ENCODE measurements at regions of chr4 and their contacts with region 1.

Region 1: DNA sequence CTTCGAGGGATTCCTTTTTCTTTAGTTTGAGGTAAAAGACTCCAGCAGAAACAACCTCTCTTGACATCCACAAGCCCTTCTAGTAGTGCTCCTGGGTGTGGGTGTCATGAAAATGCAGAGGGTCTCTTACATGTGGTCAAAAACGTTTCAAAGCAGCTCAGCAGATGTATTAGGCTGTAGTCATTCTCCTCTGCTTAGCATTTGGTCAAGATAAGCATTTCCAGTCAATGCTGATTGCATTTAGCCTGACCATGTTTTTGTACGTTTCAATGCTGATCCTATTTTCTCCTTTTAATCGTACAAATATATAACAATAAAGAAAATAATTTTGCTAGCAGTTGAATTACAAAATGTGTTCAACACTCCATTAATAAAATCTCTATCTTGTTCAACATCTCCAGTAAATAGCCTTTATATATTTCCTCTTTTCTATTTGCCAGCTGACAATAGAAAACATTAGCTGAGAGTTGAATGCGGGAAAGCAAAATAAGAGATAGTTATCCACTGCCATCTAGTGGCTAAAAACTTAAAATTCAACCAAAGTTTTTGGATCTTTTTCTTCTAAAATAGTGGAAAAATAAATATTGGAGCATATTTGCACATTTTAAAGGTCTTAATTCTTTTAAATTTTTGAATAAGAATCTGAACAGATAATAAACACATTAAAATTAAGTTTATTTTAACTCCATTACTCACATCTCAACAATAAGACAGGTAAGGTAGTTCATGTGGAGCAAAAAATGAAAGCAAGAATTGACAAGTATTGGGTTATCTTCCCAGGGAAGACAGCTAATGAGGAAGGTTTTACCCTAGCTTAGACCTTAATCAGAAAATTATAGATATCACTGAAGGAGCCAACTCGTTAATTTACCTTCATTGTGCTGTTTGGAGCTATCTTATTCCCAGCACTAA is 15.2 kb upstream of the PACRGL start:
- DNase-seq: peak; percentile 40
- H3K4me3 ChIP-seq: no peak overlapping the region
- H3K27ac ChIP-seq: no peak overlapping the region
- H3K4me1 ChIP-seq: no peaks in the 10 kb centered on the region
- H3K27me3 ChIP-seq: peaks cover 4 to 11% of the 10 kb centered on the region in 2 experiments
- CTCF ChIP-seq: peak; percentile 20 to 22
- POLR2A ChIP-seq: no peak

Region 2: GRCh38 chr4:20299515-20299914 is 385.6 kb before region 1 on chr4:
- CTCF ChIA-PET with region 1: interaction called, 8 read pairs
- POLR2A ChIA-PET with region 1: no interaction called
- dilution Hi-C with region 1: no loop called
- intact Hi-C with region 1: loop called (anchors 2 kb)
- DNase-seq: peak; percentile 58
- H3K4me3 ChIP-seq: no peak overlapping the region
- H3K27ac ChIP-seq: no peak overlapping the region
- H3K4me1 ChIP-seq: no peaks in the 10 kb centered on the region
- H3K27me3 ChIP-seq: no peaks in the 10 kb centered on the region
- CTCF ChIP-seq: peak; percentile 40 to 48
- POLR2A ChIP-seq: no peak

Region 3: DNA sequence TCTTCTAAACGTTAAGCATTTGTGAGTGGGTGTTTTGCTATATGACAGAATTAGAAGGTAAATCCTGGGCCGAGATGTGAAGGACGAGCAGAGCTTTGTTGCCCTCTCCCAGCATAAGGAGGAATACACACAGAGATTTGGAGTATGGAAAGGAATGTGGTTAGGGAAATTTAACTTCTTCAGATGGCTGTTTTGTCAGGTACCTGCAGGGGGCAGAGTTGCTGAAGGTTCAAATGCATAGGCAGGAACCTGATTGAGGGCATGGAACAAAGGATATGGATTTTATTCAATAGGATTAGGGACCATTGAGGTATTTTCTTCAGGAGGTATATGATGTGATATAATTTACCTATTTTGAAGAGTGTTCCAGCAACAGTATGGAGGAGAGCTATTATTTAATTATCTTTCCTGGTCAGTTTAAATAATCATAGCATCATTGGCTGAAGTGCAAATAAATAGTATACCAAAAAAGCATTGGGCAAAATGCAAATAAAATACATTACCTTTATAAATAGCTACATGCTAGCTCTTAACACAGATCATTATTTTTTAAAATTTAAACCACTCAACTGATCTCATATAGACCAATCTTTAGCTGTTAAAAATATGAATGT is 289.8 kb before region 1 on chr4:
- CTCF ChIA-PET with region 1: interaction called, 8 read pairs
- POLR2A ChIA-PET with region 1: no interaction called
- dilution Hi-C with region 1: loop called (anchors 25 kb)
- intact Hi-C with region 1: loop called (anchors 1 kb)
- DNase-seq: peak; percentile 45
- H3K4me3 ChIP-seq: no peak overlapping the region
- H3K27ac ChIP-seq: no peak overlapping the region
- H3K4me1 ChIP-seq: no peaks in the 10 kb centered on the region
- H3K27me3 ChIP-seq: no peaks in the 10 kb centered on the region
- CTCF ChIP-seq: peak; percentile 56 to 62
- POLR2A ChIP-seq: no peak

Region 4: GRCh38 chr4:20428436-20429160 is 256.5 kb before region 1 on chr4:
- CTCF ChIA-PET with region 1: interaction called, 17 read pairs
- POLR2A ChIA-PET with region 1: no interaction called
- dilution Hi-C with region 1: loop called (anchors 25 kb)
- intact Hi-C with region 1: no loop called
- DNase-seq: no peak
- H3K4me3 ChIP-seq: no peak overlapping the region
- H3K27ac ChIP-seq: peak overlapping the region; percentile 8
- H3K4me1 ChIP-seq: peaks cover 20% of the 10 kb centered on the region
- H3K27me3 ChIP-seq: no peaks in the 10 kb centered on the region
- CTCF ChIP-seq: no peak
- POLR2A ChIP-seq: no peak

Region 5: DNA sequence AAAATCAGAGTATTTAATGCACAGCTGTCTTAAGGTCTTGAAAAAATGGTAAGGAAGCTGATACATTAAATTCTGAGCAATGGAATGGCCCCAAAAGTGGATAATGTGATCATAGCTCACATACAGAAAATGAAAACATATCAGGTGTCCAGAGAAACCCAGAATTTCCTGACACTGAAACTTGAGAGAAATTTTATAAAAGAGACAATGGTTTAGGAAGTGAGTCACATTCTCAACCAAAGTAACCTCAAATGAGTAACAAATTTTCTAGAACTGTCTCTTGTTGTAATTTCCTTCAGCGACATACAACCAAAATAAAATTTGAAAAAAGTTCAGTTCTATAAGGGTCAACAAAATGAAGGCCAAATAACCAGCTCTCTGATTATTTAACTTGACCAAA is 22.3 kb before region 1 on chr4:
- CTCF ChIA-PET with region 1: interaction called, 13 read pairs
- POLR2A ChIA-PET with region 1: no interaction called
- dilution Hi-C with region 1: no loop called
- intact Hi-C with region 1: no loop called
- DNase-seq: peak; percentile 84
- H3K4me3 ChIP-seq: no peak overlapping the region
- H3K27ac ChIP-seq: peak overlapping the region; percentile 55
- H3K4me1 ChIP-seq: peaks cover 15% of the 10 kb centered on the region
- H3K27me3 ChIP-seq: no peaks in the 10 kb centered on the region
- CTCF ChIP-seq: no peak
- POLR2A ChIP-seq: no peak

Region 6: GRCh38 chr4:20754036-20754435 is 68.9 kb after region 1 on chr4:
- CTCF ChIA-PET with region 1: no interaction called
- POLR2A ChIA-PET with region 1: no interaction called
- dilution Hi-C with region 1: no loop called
- intact Hi-C with region 1: no loop called
- DNase-seq: no peak
- H3K4me3 ChIP-seq: no peak overlapping the region
- H3K27ac ChIP-seq: no peak overlapping the region
- H3K4me1 ChIP-seq: no peaks in the 10 kb centered on the region
- H3K27me3 ChIP-seq: no peaks in the 10 kb centered on the region
- CTCF ChIP-seq: no peak
- POLR2A ChIP-seq: no peak